ENCODE measurements at regions of chr17 and their contacts with region 1.

Region 1: GRCh38 chr17:6843241-6843880 is 11.8 kb upstream of the TEKT1 start:
- DNase-seq: no peak
- ATAC-seq: peak; percentile 56
- H3K4me3 ChIP-seq: no peak overlapping the region
- H3K27ac ChIP-seq: no peak overlapping the region
- H3K4me1 ChIP-seq: no peaks in the 10 kb centered on the region
- H3K27me3 ChIP-seq: no peaks in the 10 kb centered on the region
- CTCF ChIP-seq: peak in 6 of 7 experiments; percentile 50 to 57 (median 54)
- POLR2A ChIP-seq: no peak

Region 2: DNA sequence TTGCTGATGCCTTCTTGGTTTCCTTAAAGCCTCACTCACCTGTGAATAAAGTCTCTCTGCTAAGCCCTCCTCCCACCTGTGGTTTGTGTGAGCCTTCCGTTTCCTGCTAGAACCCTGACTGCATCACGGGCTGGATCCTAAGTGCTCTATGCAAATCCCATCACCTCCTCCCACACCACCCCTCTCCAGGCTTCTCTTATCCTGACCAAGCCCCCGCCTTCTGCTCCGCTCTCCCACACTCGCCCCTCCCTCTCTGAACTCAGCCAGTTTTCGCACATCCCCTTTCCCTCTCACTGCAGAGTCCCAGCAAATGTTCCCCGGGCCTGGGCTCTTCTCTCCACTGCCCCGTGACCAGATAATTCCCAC is 347.3 kb before region 1 on chr17:
- intact Hi-C with region 1: no loop called
- DNase-seq: no peak
- ATAC-seq: no peak
- H3K4me3 ChIP-seq: no peak overlapping the region
- H3K27ac ChIP-seq: no peak overlapping the region
- H3K4me1 ChIP-seq: no peaks in the 10 kb centered on the region
- H3K27me3 ChIP-seq: no peaks in the 10 kb centered on the region
- CTCF ChIP-seq: no peak
- POLR2A ChIP-seq: no peak

Region 3: GRCh38 chr17:7021993-7022778 is 178.8 kb after region 1 on chr17:
- intact Hi-C with region 1: loop called (anchors 10 kb)
- DNase-seq: peak; percentile 74 to 84 (median 80)
- ATAC-seq: peak; percentile 70
- H3K4me3 ChIP-seq: no peak overlapping the region
- H3K27ac ChIP-seq: peak overlapping the region in 3 of 4 donors; percentile 21 to 70 (median 43)
- H3K4me1 ChIP-seq: peaks cover 31% of the 10 kb centered on the region
- H3K27me3 ChIP-seq: no peaks in the 10 kb centered on the region
- CTCF ChIP-seq: peak; percentile 83 to 97 (median 92)
- POLR2A ChIP-seq: no peak